ENCODE measurements at regions of chr3 and their contacts with region 1.

Region 1: GRCh38 chr3:45455040-45455439 is 66.7 kb downstream of the LARS2 start:
- DNase-seq: no peak
- H3K4me3 ChIP-seq: no peak overlapping the region
- H3K27ac ChIP-seq: no peak overlapping the region
- H3K4me1 ChIP-seq: no peaks in the 10 kb centered on the region
- H3K27me3 ChIP-seq: no peaks in the 10 kb centered on the region
- CTCF ChIP-seq: no peak

Region 2: GRCh38 chr3:45402138-45402537 is 52.9 kb before region 1 on chr3:
- CTCF ChIA-PET with region 1: no interaction called
- dilution Hi-C with region 1: loop called (anchors 5 kb)
- in situ Hi-C with region 1: no loop called
- intact Hi-C with region 1: no loop called
- DNase-seq: no peak
- H3K4me3 ChIP-seq: no peak overlapping the region
- H3K27ac ChIP-seq: no peak overlapping the region
- H3K4me1 ChIP-seq: no peaks in the 10 kb centered on the region
- H3K27me3 ChIP-seq: no peaks in the 10 kb centered on the region
- CTCF ChIP-seq: no peak

Region 3: DNA sequence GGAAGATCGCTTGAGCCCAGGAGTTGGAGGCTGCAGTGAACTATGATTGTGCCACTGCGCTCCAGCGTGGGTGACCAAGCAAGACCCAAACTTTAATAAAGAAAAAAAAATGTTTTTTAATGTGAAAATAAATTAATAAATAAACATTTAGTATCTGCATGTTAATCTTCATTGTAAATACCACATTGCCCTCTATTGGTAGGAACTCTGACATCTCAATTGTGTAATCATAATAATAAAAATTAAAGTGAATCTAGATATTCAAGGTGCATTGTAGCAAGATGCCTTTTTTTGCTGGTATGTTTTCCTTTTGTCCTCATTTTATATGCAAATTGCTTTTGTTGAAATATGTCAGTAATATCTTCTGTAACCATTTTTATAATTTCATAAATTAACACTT is 44.5 kb after region 1 on chr3:
- CTCF ChIA-PET with region 1: no interaction called
- dilution Hi-C with region 1: no loop called
- in situ Hi-C with region 1: no loop called
- intact Hi-C with region 1: no loop called
- DNase-seq: peak; percentile 30
- H3K4me3 ChIP-seq: no peak overlapping the region
- H3K27ac ChIP-seq: no peak overlapping the region
- H3K4me1 ChIP-seq: no peaks in the 10 kb centered on the region
- H3K27me3 ChIP-seq: no peaks in the 10 kb centered on the region
- CTCF ChIP-seq: peak; percentile 51 to 53

Region 4: GRCh38 chr3:45948311-45948781 is 493.3 kb after region 1 on chr3:
- CTCF ChIA-PET with region 1: no interaction called
- dilution Hi-C with region 1: no loop called
- in situ Hi-C with region 1: no loop called
- intact Hi-C with region 1: no loop called
- DNase-seq: no peak
- H3K4me3 ChIP-seq: no peak overlapping the region
- H3K27ac ChIP-seq: no peak overlapping the region
- H3K4me1 ChIP-seq: no peaks in the 10 kb centered on the region
- H3K27me3 ChIP-seq: no peaks in the 10 kb centered on the region
- CTCF ChIP-seq: no peak

Region 5: DNA sequence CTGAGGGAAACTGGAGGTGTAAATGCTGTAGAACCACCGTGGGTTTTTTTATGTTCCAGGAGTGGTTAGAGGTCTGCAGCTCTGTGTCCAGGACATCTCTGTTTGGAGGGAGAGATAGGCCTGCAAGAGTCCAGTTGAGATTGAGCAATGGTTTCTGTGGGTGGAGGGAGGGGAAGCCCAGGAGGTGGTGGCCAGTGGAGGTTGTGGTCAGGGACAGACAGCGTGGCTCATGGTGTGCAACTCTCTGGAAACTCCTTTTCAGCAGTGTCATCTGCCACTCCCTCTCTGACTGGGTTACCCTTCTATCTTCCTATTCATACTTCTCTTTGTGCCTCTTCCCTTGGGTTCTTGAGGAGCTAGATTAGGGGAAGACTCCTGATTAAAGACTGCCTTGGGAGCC is 562.7 kb after region 1 on chr3:
- CTCF ChIA-PET with region 1: no interaction called
- dilution Hi-C with region 1: no loop called
- in situ Hi-C with region 1: no loop called
- intact Hi-C with region 1: no loop called
- DNase-seq: peak; percentile 78
- H3K4me3 ChIP-seq: no peak overlapping the region
- H3K27ac ChIP-seq: no peak overlapping the region
- H3K4me1 ChIP-seq: no peaks in the 10 kb centered on the region
- H3K27me3 ChIP-seq: no peaks in the 10 kb centered on the region
- CTCF ChIP-seq: no peak

Region 6: GRCh38 chr3:46406788-46407611 is 952.0 kb after region 1 on chr3 and contains the starts of genes CCR5AS and CCRL2:
- CTCF ChIA-PET with region 1: no interaction called
- dilution Hi-C with region 1: no loop called
- in situ Hi-C with region 1: no loop called
- intact Hi-C with region 1: no loop called
- DNase-seq: no peak
- H3K4me3 ChIP-seq: no peak within 1 kb of the TSS
- H3K27ac ChIP-seq: no peak within 1 kb of the TSS
- H3K4me1 ChIP-seq: no peaks in the 10 kb centered on the region
- H3K27me3 ChIP-seq: no peaks in the 10 kb centered on the region
- CTCF ChIP-seq: no peak
- total RNA-seq, gene CCRL2: not detected